HepG2 (cell line): ENCODE measurements at regions of chr14 and their contacts with region 1.

Region 1: DNA sequence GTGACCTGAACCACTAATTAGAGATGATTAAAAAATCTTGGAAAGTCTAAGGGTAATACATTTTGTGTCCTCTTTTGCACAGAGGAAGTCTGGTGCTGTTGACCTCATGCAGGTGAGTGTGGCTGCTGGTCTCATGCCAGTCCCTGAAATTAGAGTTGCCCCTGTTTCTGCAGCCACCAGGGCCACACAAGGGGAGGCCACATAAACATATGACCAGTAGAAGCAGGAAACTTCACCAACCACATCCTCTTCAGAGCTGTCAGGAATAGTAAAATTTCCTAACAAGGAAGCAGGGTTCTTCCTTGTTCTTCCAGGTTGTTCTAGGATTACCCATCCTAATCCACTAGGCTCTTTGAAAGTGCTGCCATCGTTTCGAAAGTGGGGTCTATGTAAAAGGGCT is 28.3 kb downstream of the PSMA6 start:
- DNase-seq: no peak
- ATAC-seq: peak; percentile 25
- H3K4me3 ChIP-seq: no peak overlapping the region
- H3K27ac ChIP-seq: no peak overlapping the region
- H3K4me1 ChIP-seq: no peaks in the 10 kb centered on the region
- H3K27me3 ChIP-seq: no peaks in the 10 kb centered on the region
- CTCF ChIP-seq: no peak
- EP300 ChIP-seq: no peak
- POLR2A ChIP-seq: no peak
- RAD21 ChIP-seq: no peak

Region 2: DNA sequence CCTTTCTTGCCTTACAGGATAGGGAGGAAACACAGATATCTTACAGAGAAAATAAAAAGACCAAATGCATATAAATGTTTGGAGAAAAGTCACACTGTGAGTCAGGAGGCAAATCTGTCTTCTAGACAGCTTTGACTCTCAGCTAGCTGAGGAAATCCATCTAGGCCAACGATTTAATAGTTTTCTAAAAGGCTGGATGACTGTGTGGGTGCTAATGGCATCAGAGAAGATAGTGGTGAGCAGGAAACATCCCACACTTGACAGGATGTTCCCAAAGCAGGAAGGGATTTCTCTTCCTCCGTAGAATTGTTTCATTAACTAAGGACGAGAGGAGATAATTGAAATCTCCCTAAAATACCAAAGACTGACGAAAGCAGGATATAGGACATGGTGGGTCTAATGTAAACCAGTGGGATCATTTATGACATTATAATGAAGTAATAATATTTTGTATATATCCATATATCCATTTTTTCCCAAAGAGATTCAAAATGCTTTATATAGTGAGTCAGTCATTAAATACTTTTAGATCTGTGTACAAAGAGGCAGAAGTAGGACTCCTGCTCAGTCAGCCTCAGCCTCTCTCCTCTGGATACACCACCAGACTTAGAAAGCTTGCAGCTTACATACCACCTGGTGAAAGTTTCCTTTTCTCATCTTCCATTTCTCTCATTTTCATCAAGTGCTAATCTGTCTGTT is 72.5 kb before region 1 on chr14:
- CTCF ChIA-PET with region 1: no interaction called
- POLR2A ChIA-PET with region 1: no interaction called
- in situ Hi-C with region 1: no loop called
- intact Hi-C with region 1: no loop called
- DNase-seq: no peak
- ATAC-seq: no peak; the same call in 2 of the 3 replicates
- H3K4me3 ChIP-seq: no peak overlapping the region
- H3K27ac ChIP-seq: no peak overlapping the region
- H3K4me1 ChIP-seq: no peaks in the 10 kb centered on the region
- H3K27me3 ChIP-seq: no peaks in the 10 kb centered on the region
- CTCF ChIP-seq: no peak
- EP300 ChIP-seq: no peak
- POLR2A ChIP-seq: no peak
- RAD21 ChIP-seq: no peak

Region 3: GRCh38 chr14:35331605-35332516 is 11.4 kb after region 1 on chr14:
- CTCF ChIA-PET with region 1: no interaction called
- POLR2A ChIA-PET with region 1: interaction called, 12 read pairs
- in situ Hi-C with region 1: no loop called
- intact Hi-C with region 1: no loop called
- DNase-seq: peak; percentile 75
- ATAC-seq: peak; percentile 31
- H3K4me3 ChIP-seq: peak overlapping the region; percentile 32 to 62 (median 41)
- H3K27ac ChIP-seq: no peak overlapping the region
- H3K4me1 ChIP-seq: peaks cover 67% of the 10 kb centered on the region
- H3K27me3 ChIP-seq: no peaks in the 10 kb centered on the region
- CTCF ChIP-seq: peak; percentile 11; the same call in 1 of the 2 replicates
- EP300 ChIP-seq: no peak
- POLR2A ChIP-seq: no peak
- RAD21 ChIP-seq: peak; percentile 39; the same call in 1 of the 2 replicates